H1 (cell line): ENCODE measurements at regions of chr5 and their contacts with region 1.

Region 1: GRCh38 chr5:155943516-155944407 is 383.2 kb upstream of the SGCD start:
- DNase-seq: peak in 1 of 2 experiments; percentile 53
- H3K4me3 ChIP-seq: no peak overlapping the region
- H3K27ac ChIP-seq: no peak overlapping the region
- H3K4me1 ChIP-seq: no peaks in the 10 kb centered on the region
- H3K27me3 ChIP-seq: no peaks in the 10 kb centered on the region
- CTCF ChIP-seq: peak; percentile 80 to 93 (median 84)
- EP300 ChIP-seq: no peak
- POLR2A ChIP-seq: no peak
- RAD21 ChIP-seq: peak; percentile 93

Region 2: DNA sequence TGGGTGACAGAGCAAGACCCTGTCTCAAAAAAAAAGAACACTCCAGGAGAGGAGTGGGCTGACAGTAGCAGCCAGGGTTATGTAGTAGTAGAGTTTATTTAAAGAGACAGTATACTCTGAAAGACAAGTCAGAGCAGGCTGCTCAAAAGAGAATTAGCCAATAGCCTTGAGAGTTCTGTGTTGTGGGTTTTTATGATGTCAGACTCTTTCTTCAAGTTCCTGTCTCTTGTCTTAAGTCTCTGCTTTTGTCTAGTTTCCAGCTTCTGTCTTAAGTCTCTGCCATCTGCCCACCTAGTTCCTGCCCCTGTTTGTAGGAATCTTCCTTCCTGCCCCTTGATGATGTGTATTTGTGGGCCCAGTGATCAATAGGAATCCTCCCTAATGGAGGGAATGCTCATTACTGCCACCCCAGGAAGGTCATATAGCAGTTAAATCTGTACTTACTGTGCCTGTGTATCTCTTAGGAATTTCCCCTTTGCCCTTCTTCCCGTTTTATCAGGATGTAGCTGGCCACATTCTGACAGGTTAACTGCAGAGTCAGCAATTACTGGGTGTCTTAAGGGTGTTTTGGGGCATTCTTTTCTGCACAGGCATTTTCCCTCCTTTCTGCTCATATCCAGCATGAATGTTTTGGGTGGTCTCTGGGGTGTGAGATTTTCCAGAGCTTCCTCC is 197.3 kb before region 1 on chr5:
- CTCF ChIA-PET with region 1: no interaction called
- POLR2A ChIA-PET with region 1: no interaction called
- DNase-seq: no peak
- H3K4me3 ChIP-seq: no peak overlapping the region
- H3K27ac ChIP-seq: no peak overlapping the region
- H3K4me1 ChIP-seq: no peaks in the 10 kb centered on the region
- H3K27me3 ChIP-seq: no peaks in the 10 kb centered on the region
- CTCF ChIP-seq: peak in 1 of 3 experiments; percentile 23; a peak in 1 of 4 replicates
- EP300 ChIP-seq: no peak
- POLR2A ChIP-seq: no peak
- RAD21 ChIP-seq: no peak

Region 3: DNA sequence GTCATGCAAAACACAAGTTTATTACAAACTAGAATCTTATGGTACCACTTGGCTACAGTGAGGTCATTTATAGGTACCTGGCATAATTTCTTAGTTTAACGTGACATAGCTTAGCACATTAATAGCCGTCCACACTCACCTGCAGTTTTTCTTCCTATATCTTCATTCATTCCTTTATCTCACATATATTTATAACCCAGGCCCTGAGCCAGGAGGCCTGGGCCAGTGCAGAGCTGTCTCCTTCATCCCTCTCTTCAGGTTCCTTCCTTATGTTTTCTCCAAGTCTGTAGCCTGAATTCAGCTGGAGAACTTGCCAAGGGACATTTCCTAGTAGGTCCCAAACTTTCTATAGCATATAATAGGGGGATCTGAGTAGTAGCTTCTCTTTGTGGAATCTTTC is 15.3 kb after region 1 on chr5:
- CTCF ChIA-PET with region 1: interaction called, 10 read pairs
- POLR2A ChIA-PET with region 1: no interaction called
- DNase-seq: no peak
- H3K4me3 ChIP-seq: no peak overlapping the region
- H3K27ac ChIP-seq: no peak overlapping the region
- H3K4me1 ChIP-seq: no peaks in the 10 kb centered on the region
- H3K27me3 ChIP-seq: no peaks in the 10 kb centered on the region
- CTCF ChIP-seq: no peak
- EP300 ChIP-seq: no peak
- POLR2A ChIP-seq: no peak
- RAD21 ChIP-seq: no peak

Region 4: GRCh38 chr5:156053056-156053455 is 109.3 kb after region 1 on chr5:
- CTCF ChIA-PET with region 1: interaction called, 11 read pairs
- POLR2A ChIA-PET with region 1: no interaction called
- DNase-seq: no peak
- H3K4me3 ChIP-seq: no peak overlapping the region
- H3K27ac ChIP-seq: no peak overlapping the region
- H3K4me1 ChIP-seq: no peaks in the 10 kb centered on the region
- H3K27me3 ChIP-seq: no peaks in the 10 kb centered on the region
- CTCF ChIP-seq: no peak
- EP300 ChIP-seq: no peak
- POLR2A ChIP-seq: no peak
- RAD21 ChIP-seq: no peak